ENCODE measurements at regions of chr1 and their contacts with region 1.

Region 1: GRCh38 chr1:9910425-9911178 is 533 bp upstream of the CTNNBIP1 start:
- DNase-seq: peak; percentile 99 to 100 (median 100)
- ATAC-seq: peak; percentile 95
- H3K4me3 ChIP-seq: peak overlapping the region; percentile 89
- H3K4me3 Mint-ChIP-seq: peak overlapping the region; percentile 88 to 98 (median 96)
- H3K27ac ChIP-seq: peak overlapping the region; percentile 75
- H3K27ac Mint-ChIP-seq: peak overlapping the region; percentile 84 to 98 (median 97)
- H3K4me1 ChIP-seq: peaks cover 13 to 15% of the 10 kb centered on the region in 2 donors
- H3K4me1 Mint-ChIP-seq: peaks cover 25 to 43% (median 31%) of the 10 kb centered on the region in 7 donors
- H3K27me3 ChIP-seq: no peaks in the 10 kb centered on the region
- H3K27me3 Mint-ChIP-seq: peaks cover 0 to 10% (median 0%) of the 10 kb centered on the region in 5 donors

Region 2: DNA sequence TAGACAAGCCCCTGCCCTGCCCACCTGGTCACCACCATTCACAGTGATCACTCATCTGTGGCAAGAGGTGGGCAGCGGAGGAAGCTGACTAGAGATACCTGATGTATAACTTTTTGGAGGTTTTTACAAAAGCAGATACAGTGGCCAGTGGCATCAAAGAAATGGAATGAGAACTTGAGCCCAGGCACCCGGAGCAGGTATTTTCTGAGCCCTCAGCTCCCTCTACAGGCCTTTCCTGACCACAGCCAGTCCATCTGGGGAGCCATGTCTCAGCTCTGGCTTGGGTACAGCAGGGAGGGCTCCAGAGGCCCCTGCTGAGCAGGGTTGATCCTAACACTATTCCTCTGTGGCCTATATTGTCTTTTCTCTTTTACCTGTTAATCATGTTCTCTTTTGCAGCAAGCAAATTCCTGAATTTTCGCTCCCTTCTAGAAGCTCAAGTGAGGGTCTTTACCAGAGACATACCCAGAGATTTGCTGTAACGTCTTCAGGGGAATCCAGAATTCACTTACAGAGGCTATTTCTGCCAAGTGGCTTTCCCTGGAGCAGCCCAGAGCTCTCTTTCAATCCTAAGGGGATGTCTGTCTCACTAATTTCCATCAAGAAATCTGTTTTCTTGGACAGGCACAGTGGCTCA is 809.0 kb before region 1 on chr1:
- CTCF ChIA-PET with region 1: no interaction called
- POLR2A ChIA-PET with region 1: no interaction called
- intact Hi-C with region 1: no loop called
- DNase-seq: peak in 1 of 9 donors; percentile 16
- ATAC-seq: peak; percentile 64
- H3K4me3 ChIP-seq: no peak overlapping the region
- H3K4me3 Mint-ChIP-seq: no peak overlapping the region
- H3K27ac ChIP-seq: no peak overlapping the region
- H3K27ac Mint-ChIP-seq: no peak overlapping the region
- H3K4me1 ChIP-seq: no peaks in the 10 kb centered on the region
- H3K4me1 Mint-ChIP-seq: no peaks in the 10 kb centered on the region
- H3K27me3 ChIP-seq: no peaks in the 10 kb centered on the region
- H3K27me3 Mint-ChIP-seq: no peaks in the 10 kb centered on the region

Region 3: DNA sequence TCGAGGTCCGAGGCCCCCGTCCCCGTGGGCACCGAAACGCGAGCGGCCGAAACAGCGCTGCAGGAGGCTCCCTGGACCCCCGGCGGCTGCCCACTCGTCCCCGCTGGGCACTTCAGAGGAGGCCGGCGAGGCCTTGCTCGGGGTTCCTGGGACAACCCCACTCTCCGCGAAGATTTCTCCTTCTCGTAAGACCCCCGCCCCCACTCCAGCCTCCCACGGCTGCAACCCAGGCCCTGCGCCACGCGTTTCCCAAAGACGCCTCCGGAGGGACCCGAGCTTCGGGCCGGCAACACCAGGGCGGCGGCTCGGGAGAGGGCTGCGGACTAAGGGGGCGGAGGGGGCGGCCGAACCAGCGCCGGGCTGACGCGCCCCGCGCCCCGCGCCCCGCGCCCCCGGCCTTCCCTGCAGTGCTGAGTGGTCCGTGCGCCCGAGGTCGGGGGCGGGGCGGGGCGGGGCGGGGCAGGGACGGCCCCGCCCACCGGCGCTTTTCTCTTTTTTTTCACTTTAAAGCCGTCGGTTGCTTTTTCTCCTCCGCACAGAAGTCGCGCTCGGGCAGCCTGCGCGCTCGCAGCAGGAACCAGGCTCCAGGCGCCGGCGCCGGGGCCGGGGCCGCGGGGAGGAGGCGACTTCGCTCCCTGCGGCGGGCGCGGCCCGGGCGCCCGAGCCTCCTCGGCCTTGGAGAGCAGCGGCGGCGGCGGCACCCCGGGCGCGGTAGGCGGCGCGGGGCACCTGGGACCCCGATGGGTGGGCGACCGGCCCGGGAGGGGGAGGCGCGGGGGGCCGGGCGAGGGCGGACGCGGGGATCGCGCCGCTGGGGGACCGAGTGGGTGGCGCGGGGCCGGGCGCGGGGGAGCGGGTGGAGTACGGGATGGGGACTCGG is 618.0 kb before region 1 on chr1 and contains the start of gene SPSB1:
- CTCF ChIA-PET with region 1: no interaction called
- POLR2A ChIA-PET with region 1: no interaction called
- intact Hi-C with region 1: loop called in 1 of 2 experiments (anchors 1 kb)
- DNase-seq: peak; percentile 30 to 66 (median 56)
- ATAC-seq: peak; percentile 81
- H3K4me3 ChIP-seq: peak within 1 kb of the TSS; percentile 55
- H3K4me3 Mint-ChIP-seq: peak within 1 kb of the TSS; percentile 34 to 86 (median 66)
- H3K27ac ChIP-seq: peak within 1 kb of the TSS; percentile 27
- H3K27ac Mint-ChIP-seq: peak within 1 kb of the TSS in 8 of 9 donors; percentile 21 to 81 (median 52)
- H3K4me1 ChIP-seq: peaks cover 6 to 19% of the 10 kb centered on the region in 2 donors
- H3K4me1 Mint-ChIP-seq: peaks cover 6 to 40% (median 32%) of the 10 kb centered on the region in 7 donors
- H3K27me3 ChIP-seq: no peaks in the 10 kb centered on the region
- H3K27me3 Mint-ChIP-seq: no peaks in the 10 kb centered on the region
- total RNA-seq, gene SPSB1: 1.8 to 10.3 (median 1.9) TPM

Region 4: DNA sequence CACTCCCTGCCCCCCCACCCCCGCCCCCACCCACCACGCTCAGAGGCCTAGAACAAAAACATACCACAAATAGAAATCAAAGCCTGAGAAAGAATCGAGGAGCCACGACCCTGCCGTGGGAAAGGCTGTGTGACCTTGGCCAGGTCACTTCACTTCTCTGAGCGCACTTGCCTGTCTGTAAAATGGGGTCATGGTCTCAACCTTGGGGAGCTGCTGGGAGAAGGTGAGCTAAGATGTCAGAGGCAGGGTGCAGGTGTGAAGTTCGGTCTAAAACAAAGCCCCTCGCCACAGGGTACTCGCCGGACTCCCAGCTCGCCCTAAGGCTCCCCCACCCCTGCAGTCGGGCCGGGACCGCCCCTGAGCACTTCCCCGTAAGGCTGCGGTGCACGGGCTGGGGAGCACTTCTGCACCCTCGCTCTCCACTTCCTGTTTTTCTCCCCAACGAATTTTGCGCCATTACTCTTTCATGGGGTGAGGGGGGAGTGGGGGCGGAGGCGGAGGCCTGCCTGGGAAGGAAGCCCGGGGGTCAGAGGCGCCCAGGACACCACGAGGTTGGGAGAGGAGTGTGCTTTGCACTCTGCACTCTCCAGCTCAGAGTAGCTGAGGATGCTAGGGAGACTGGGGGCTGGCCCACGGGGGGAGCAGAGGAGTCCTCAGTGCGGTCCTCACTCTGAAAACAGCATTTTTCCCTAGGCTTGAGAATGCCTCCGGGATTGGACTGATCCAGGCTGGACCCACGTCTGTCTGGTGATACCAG is 281.0 kb before region 1 on chr1:
- CTCF ChIA-PET with region 1: interaction called, 4 read pairs
- POLR2A ChIA-PET with region 1: no interaction called
- intact Hi-C with region 1: loop called in 1 of 2 experiments (anchors 1 kb)
- DNase-seq: peak; percentile 53 to 86 (median 83)
- ATAC-seq: peak; percentile 69
- H3K4me3 ChIP-seq: peak overlapping the region; percentile 64
- H3K4me3 Mint-ChIP-seq: peak overlapping the region; percentile 90 to 100 (median 98)
- H3K27ac ChIP-seq: peak overlapping the region; percentile 87
- H3K27ac Mint-ChIP-seq: peak overlapping the region; percentile 85 to 98 (median 94)
- H3K4me1 ChIP-seq: peaks cover 35 to 38% of the 10 kb centered on the region in 2 donors
- H3K4me1 Mint-ChIP-seq: peaks cover 46 to 72% (median 65%) of the 10 kb centered on the region in 7 donors
- H3K27me3 ChIP-seq: no peaks in the 10 kb centered on the region
- H3K27me3 Mint-ChIP-seq: peaks cover 0 to 2% (median 0%) of the 10 kb centered on the region in 5 donors

Region 5: GRCh38 chr1:9724706-9725476 is 185.7 kb before region 1 on chr1:
- CTCF ChIA-PET with region 1: no interaction called
- POLR2A ChIA-PET with region 1: no interaction called
- intact Hi-C with region 1: loop called in 1 of 2 experiments (anchors 1 kb)
- DNase-seq: peak; percentile 58 to 72 (median 64)
- ATAC-seq: peak; percentile 65
- H3K4me3 ChIP-seq: no peak overlapping the region
- H3K4me3 Mint-ChIP-seq: peak overlapping the region in 8 of 10 donors; percentile 14 to 68 (median 62)
- H3K27ac ChIP-seq: peak overlapping the region; percentile 51
- H3K27ac Mint-ChIP-seq: peak overlapping the region; percentile 73 to 88 (median 80)
- H3K4me1 ChIP-seq: peaks cover 36 to 83% of the 10 kb centered on the region in 2 donors
- H3K4me1 Mint-ChIP-seq: peaks cover 38 to 84% (median 60%) of the 10 kb centered on the region in 7 donors
- H3K27me3 ChIP-seq: no peaks in the 10 kb centered on the region
- H3K27me3 Mint-ChIP-seq: no peaks in the 10 kb centered on the region

Region 6: DNA sequence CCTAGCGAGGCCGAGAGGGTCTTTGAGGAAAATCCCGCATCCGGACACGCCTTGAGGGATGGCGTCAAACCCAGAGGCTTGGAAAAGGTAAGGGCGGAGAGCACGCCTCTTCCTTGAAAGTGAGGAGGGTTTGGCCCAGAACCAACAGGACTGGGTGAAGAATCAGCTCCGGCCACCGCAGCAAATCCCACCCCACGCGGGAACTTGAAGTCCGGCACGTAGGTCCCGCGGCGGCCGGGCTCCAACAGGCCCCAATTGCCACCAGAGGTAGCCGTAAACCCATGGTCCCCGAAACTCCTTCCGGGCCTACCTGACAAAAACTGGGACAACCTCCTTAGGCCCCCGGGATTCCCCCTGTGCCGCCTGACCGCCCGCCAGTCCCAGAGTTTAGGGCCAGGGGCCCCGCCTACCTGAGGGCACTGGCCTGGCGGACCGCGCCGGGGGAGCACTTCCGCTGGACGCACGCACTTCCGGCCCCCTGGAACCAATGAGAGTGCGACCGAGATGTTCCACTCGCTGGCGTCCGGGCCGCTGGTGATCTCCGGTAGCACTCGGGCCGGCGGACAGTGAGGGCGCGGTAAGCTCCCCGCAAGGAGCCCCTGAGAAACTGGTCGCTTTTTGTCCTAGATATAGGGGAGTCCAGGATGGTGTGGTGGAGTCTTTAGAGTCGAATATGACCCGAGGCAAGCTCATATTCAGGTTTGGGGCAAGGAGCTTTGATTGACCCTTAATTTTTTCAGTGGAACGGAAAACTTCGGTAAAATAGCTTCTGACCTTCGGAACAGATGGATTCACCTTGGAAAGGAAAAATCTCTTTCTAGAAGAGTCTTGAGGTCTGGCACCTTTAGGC is 32.6 kb after region 1 on chr1 and contains the starts of genes LZIC and NMNAT1:
- CTCF ChIA-PET with region 1: interaction called, 4 read pairs
- POLR2A ChIA-PET with region 1: interaction called, 9 read pairs
- intact Hi-C with region 1: loop called (anchors 1 kb)
- DNase-seq: peak; percentile 71 to 92 (median 82)
- ATAC-seq: peak; percentile 98
- H3K4me3 ChIP-seq: peak within 1 kb of the TSS; percentile 71
- H3K4me3 Mint-ChIP-seq: peak within 1 kb of the TSS; percentile 91 to 98 (median 97)
- H3K27ac ChIP-seq: peak within 1 kb of the TSS; percentile 92
- H3K27ac Mint-ChIP-seq: peak within 1 kb of the TSS; percentile 93 to 99 (median 97)
- H3K4me1 ChIP-seq: peaks cover 0 to 9% of the 10 kb centered on the region in 2 donors
- H3K4me1 Mint-ChIP-seq: peaks cover 17 to 33% (median 26%) of the 10 kb centered on the region in 7 donors
- H3K27me3 ChIP-seq: no peaks in the 10 kb centered on the region
- H3K27me3 Mint-ChIP-seq: no peaks in the 10 kb centered on the region
- total RNA-seq, gene LZIC: 18.0 to 35.1 (median 31.0) TPM
- total RNA-seq, gene NMNAT1: 2.7 to 8.3 (median 7.5) TPM

Region 7: DNA sequence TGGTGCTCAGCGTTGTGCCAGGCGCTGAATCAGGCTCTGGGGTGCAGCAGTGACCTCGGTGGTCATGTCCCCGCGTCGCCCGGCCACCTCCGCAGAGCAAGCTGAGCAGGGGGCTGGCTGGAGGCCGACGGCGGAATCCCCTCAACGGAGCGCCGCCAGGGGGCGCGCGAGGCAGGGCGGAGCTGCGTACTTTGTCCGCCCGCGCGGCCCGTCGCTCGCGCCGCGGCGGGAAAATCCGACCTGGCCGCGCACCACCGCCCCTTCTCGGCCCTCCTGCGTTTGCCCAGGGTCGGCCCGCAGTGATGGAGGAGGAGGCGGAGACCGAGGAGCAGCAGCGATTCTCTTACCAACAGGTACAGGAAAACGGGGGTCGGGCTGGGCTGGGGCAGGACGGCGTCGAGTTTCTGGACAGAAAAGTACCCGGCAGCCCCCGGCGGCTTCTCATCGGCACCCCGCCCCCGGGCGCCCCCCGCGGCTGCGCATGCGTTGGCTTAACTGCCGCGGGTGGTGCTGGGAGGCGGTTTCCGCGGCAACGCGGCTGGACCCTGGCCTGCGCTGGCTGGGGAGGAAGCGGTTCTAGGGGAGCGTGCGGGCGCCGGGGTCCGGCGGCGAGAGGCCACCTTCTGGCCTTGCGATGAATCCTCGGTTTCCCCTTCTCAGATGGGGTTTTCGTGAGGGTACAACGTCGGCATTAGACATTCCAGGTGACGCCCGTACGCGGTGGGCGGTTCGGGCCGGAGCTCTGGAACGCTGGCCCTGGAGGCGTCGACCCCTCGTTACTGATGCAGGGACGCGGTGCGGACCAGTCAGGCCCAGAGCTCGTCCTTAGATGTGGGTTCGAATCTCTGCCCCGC is 519.8 kb after region 1 on chr1 and contains the start of gene CENPS:
- CTCF ChIA-PET with region 1: no interaction called
- POLR2A ChIA-PET with region 1: no interaction called
- intact Hi-C with region 1: loop called in 1 of 2 experiments (anchors 1 kb)
- DNase-seq: peak; percentile 68 to 96 (median 91)
- ATAC-seq: peak; percentile 93
- H3K4me3 ChIP-seq: peak within 1 kb of the TSS; percentile 97
- H3K4me3 Mint-ChIP-seq: peak within 1 kb of the TSS; percentile 82 to 98 (median 88)
- H3K27ac ChIP-seq: peak within 1 kb of the TSS; percentile 88
- H3K27ac Mint-ChIP-seq: peak within 1 kb of the TSS; percentile 66 to 96 (median 92)
- H3K4me1 ChIP-seq: peaks cover 3 to 8% of the 10 kb centered on the region in 2 donors
- H3K4me1 Mint-ChIP-seq: peaks cover 0 to 26% (median 20%) of the 10 kb centered on the region in 7 donors
- H3K27me3 ChIP-seq: no peaks in the 10 kb centered on the region
- H3K27me3 Mint-ChIP-seq: peaks cover 0 to 2% (median 0%) of the 10 kb centered on the region in 5 donors
- total RNA-seq, gene CENPS: 5.4 to 13.0 (median 9.8) TPM